Activated naive CD4-positive, alpha-beta T cell treated with anti-CD3 and anti-CD28 coated beads for 36 hours (primary cell): ENCODE measurements at regions of chr6 and their contacts with region 1.

Region 1: DNA sequence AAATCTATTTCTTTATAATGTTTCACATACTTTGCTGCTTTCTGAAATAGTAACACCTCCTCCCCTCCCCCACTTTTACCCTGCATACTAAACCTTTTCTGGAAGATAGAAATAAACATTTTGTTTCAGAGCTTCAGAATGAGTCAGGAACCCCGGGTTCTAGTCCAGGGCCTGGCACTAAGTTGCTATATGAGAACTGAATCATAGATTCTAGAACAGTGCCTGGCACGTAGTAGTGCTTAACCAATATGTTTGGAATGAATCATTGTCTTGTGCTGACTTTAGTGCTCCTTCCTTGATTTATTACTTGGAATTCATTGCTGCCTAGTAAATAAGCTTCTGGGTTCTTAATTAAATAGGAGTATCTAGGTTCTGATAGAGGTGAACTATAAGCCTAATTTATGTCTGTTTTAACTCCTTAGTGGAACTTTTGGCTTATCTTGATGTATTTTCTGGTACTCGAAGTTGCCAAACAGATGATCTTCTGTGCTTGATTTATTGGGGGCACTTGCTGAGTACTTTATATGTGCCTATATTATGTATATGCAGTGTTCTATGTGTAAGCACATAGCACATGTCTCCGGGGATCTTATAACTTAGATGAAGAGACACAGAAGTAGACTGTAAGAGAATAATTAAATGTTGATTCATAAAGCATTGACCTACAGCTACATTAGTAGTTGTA is 18.6 kb downstream of the TAB2 start:
- DNase-seq: peak; percentile 84
- H3K4me3 Mint-ChIP-seq: peak overlapping the region; percentile 59
- H3K27ac Mint-ChIP-seq: peak overlapping the region; percentile 97
- H3K4me1 Mint-ChIP-seq: peaks cover 82% of the 10 kb centered on the region
- H3K27me3 Mint-ChIP-seq: no peaks in the 10 kb centered on the region

Region 2: DNA sequence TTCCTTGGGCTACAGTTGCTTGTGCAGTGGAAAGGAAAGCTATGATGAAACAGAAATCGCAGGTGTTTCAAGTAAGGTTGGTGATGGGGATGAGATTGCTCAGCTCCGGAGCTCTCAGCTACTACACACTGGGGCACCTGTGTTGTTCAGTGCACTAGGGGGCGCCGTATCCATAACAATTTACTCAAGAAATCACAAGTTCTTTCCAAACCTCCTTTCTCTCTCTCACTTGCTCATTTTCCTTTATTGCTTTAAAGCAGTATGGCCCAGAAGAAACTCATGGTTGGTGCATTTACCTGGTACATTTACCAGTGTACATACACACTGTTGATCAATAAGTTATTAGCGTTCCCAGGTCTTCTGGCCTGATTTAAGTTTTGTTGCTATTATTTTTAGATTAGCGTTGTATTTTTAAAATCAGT is 253.8 kb before region 1 on chr6:
- CTCF ChIA-PET with region 1: no interaction called
- intact Hi-C with region 1: loop called (anchors 2 kb)
- DNase-seq: peak; percentile 97
- H3K4me3 Mint-ChIP-seq: no peak overlapping the region
- H3K27ac Mint-ChIP-seq: peak overlapping the region; percentile 41
- H3K4me1 Mint-ChIP-seq: peaks cover 54% of the 10 kb centered on the region
- H3K27me3 Mint-ChIP-seq: no peaks in the 10 kb centered on the region

Region 3: GRCh38 chr6:149211046-149211571 is 125.0 kb before region 1 on chr6:
- CTCF ChIA-PET with region 1: no interaction called
- intact Hi-C with region 1: loop called (anchors 1 kb)
- DNase-seq: peak; percentile 57
- H3K4me3 Mint-ChIP-seq: no peak overlapping the region
- H3K27ac Mint-ChIP-seq: peak overlapping the region; percentile 77
- H3K4me1 Mint-ChIP-seq: peaks cover 19% of the 10 kb centered on the region
- H3K27me3 Mint-ChIP-seq: no peaks in the 10 kb centered on the region

Region 4: GRCh38 chr6:149323925-149324324 is 12.1 kb before region 1 on chr6:
- CTCF ChIA-PET with region 1: interaction called, 10 read pairs
- intact Hi-C with region 1: loop called (anchors 1 kb)
- DNase-seq: no peak
- H3K4me3 Mint-ChIP-seq: peak overlapping the region; percentile 8
- H3K27ac Mint-ChIP-seq: peak overlapping the region; percentile 85
- H3K4me1 Mint-ChIP-seq: peaks cover 77% of the 10 kb centered on the region
- H3K27me3 Mint-ChIP-seq: no peaks in the 10 kb centered on the region

Region 5: GRCh38 chr6:149380523-149380922 is 44.5 kb after region 1 on chr6:
- CTCF ChIA-PET with region 1: no interaction called
- intact Hi-C with region 1: loop called (anchors 1 kb)
- DNase-seq: peak; percentile 35
- H3K4me3 Mint-ChIP-seq: no peak overlapping the region
- H3K27ac Mint-ChIP-seq: no peak overlapping the region
- H3K4me1 Mint-ChIP-seq: peaks cover 63% of the 10 kb centered on the region
- H3K27me3 Mint-ChIP-seq: no peaks in the 10 kb centered on the region

Region 6: GRCh38 chr6:149499066-149499465 is 163.0 kb after region 1 on chr6:
- CTCF ChIA-PET with region 1: no interaction called
- intact Hi-C with region 1: loop called (anchors 1 kb)
- DNase-seq: no peak
- H3K4me3 Mint-ChIP-seq: no peak overlapping the region
- H3K27ac Mint-ChIP-seq: peak overlapping the region; percentile 87
- H3K4me1 Mint-ChIP-seq: peaks cover 81% of the 10 kb centered on the region
- H3K27me3 Mint-ChIP-seq: no peaks in the 10 kb centered on the region